Activated CD4-positive, alpha-beta memory T cell treated with anti-CD3 and anti-CD28 coated beads for 36 hours (primary cell): ENCODE measurements at regions of chr6 and their contacts with region 1.

Region 1: GRCh38 chr6:152338335-152339125 is 298.6 kb downstream of the SYNE1 start:
- DNase-seq: peak; percentile 72
- H3K4me3 Mint-ChIP-seq: no peak overlapping the region
- H3K27ac Mint-ChIP-seq: no peak overlapping the region
- H3K4me1 Mint-ChIP-seq: peaks cover 2% of the 10 kb centered on the region
- H3K27me3 Mint-ChIP-seq: peaks cover 2% of the 10 kb centered on the region

Region 2: DNA sequence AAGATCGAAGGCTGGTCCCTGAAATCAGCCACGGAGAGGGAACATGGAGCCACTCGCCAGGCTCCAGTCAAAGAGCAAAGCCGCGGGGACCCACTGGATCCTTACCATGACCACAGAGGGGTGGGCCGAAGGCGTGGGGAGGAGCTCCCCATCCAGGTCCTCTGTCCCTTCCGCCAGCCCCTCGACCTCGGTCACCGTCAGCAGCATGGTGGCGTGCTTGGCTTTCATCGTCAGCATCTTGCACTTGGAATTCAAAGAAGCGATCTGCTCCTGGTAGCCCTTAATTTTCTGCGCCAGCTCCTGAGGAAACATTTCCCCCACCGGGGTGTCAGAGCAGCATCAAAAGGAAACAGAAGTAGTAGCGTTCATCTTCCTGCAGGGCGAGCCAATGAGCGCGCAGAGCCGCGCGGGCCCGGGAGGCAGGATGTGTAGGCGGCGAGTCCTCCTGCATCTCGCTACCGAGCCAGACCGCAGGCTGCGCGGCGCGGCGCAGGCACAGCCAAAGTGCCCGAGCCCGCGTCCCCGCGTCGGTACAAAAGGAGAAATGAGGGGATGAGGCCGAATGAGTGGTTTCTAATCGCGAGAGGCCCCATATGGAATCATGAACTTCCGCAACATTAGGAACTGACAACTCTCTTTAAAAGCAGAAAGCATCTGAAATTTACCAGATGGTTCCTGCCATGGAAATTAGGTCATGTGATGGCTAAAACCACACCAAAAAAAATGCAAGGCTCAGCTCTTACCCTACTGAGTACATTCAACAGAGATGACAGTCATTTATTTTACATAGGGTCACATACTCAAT is 36.6 kb before region 1 on chr6:
- CTCF ChIA-PET with region 1: interaction called, 84 read pairs
- POLR2A ChIA-PET with region 1: interaction called, 5 read pairs
- intact Hi-C with region 1: loop called (anchors 1 kb)
- DNase-seq: peak; percentile 94
- H3K4me3 Mint-ChIP-seq: peak overlapping the region; percentile 99
- H3K27ac Mint-ChIP-seq: peak overlapping the region; percentile 95
- H3K4me1 Mint-ChIP-seq: peaks cover 31% of the 10 kb centered on the region
- H3K27me3 Mint-ChIP-seq: no peaks in the 10 kb centered on the region

Region 3: GRCh38 chr6:152309648-152310047 is 28.9 kb before region 1 on chr6:
- CTCF ChIA-PET with region 1: interaction called, 16 read pairs
- POLR2A ChIA-PET with region 1: no interaction called
- intact Hi-C with region 1: no loop called
- DNase-seq: peak; percentile 87
- H3K4me3 Mint-ChIP-seq: no peak overlapping the region
- H3K27ac Mint-ChIP-seq: peak overlapping the region; percentile 57
- H3K4me1 Mint-ChIP-seq: peaks cover 18% of the 10 kb centered on the region
- H3K27me3 Mint-ChIP-seq: no peaks in the 10 kb centered on the region

Region 4: GRCh38 chr6:152316024-152316423 is 22.5 kb before region 1 on chr6:
- CTCF ChIA-PET with region 1: interaction called, 19 read pairs
- POLR2A ChIA-PET with region 1: no interaction called
- intact Hi-C with region 1: no loop called
- DNase-seq: no peak
- H3K4me3 Mint-ChIP-seq: no peak overlapping the region
- H3K27ac Mint-ChIP-seq: no peak overlapping the region
- H3K4me1 Mint-ChIP-seq: no peaks in the 10 kb centered on the region
- H3K27me3 Mint-ChIP-seq: peaks cover 2% of the 10 kb centered on the region

Region 5: DNA sequence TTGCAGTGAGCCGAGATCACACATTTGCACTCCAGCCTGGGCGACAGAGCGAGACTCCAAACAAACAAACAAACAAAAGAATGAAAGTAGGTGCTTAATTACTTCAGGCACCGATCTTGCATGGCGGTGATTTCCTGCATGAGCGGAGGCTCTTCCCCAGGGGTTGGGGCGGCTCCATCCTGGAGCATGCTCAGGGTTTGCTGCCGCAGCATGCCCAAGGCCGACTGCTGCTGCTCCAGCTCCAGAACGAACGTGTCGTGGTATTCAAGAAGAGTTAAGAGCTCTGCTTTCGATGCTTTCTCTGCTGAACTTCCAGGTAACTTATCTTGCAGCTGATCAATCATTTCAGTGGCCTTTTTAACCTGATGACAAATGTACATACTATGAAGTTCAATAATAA is 15.2 kb before region 1 on chr6:
- CTCF ChIA-PET with region 1: interaction called, 24 read pairs
- POLR2A ChIA-PET with region 1: no interaction called
- intact Hi-C with region 1: no loop called
- DNase-seq: no peak
- H3K4me3 Mint-ChIP-seq: no peak overlapping the region
- H3K27ac Mint-ChIP-seq: no peak overlapping the region
- H3K4me1 Mint-ChIP-seq: no peaks in the 10 kb centered on the region
- H3K27me3 Mint-ChIP-seq: peaks cover 5% of the 10 kb centered on the region

Region 6: DNA sequence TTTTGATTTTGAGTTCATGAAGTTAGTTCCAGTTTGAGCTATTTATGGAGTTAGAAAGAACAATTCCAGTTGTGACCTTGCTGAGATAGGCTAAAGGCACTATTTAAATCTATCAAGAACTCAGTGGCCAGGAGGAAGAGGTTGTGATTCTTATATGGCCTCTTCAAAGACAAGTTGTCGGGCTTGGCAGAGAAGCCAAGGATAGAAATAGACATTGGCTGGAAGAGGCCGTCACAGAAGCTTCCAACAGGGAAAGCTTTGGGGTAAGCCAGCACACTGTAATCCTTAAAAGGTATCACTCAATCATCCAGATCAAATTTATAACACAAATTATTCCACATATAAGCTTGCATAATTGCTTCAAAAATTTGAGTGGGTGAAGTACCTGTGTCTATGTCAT is 12.6 kb after region 1 on chr6:
- CTCF ChIA-PET with region 1: interaction called, 25 read pairs
- POLR2A ChIA-PET with region 1: no interaction called
- intact Hi-C with region 1: no loop called
- DNase-seq: no peak
- H3K4me3 Mint-ChIP-seq: no peak overlapping the region
- H3K27ac Mint-ChIP-seq: no peak overlapping the region
- H3K4me1 Mint-ChIP-seq: no peaks in the 10 kb centered on the region
- H3K27me3 Mint-ChIP-seq: peaks cover 2% of the 10 kb centered on the region

Region 7: GRCh38 chr6:152432758-152433157 is 94.2 kb after region 1 on chr6:
- CTCF ChIA-PET with region 1: no interaction called
- POLR2A ChIA-PET with region 1: no interaction called
- intact Hi-C with region 1: no loop called
- DNase-seq: no peak
- H3K4me3 Mint-ChIP-seq: no peak overlapping the region
- H3K27ac Mint-ChIP-seq: no peak overlapping the region
- H3K4me1 Mint-ChIP-seq: no peaks in the 10 kb centered on the region
- H3K27me3 Mint-ChIP-seq: peaks cover 6% of the 10 kb centered on the region

Region 8: DNA sequence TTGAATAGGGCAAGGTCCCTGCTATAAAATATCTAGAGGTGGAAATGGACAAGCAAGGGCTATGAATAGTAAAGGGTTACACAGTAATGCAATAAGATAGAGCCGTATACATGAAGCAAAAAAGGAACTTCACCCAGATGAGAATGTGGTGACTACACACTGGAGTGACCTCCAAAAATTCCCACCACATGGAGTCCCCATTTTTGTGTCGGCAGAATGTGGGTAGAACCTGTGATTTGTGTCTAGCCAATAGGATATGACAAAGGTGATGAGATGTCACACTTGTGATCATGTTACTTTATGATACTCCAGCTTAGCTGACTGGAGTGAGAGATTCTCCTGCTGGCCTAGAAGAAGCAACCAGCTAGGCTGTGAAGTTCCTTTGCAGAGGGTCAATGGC is 201.9 kb after region 1 on chr6:
- CTCF ChIA-PET with region 1: no interaction called
- POLR2A ChIA-PET with region 1: no interaction called
- intact Hi-C with region 1: no loop called
- DNase-seq: no peak
- H3K4me3 Mint-ChIP-seq: no peak overlapping the region
- H3K27ac Mint-ChIP-seq: no peak overlapping the region
- H3K4me1 Mint-ChIP-seq: no peaks in the 10 kb centered on the region
- H3K27me3 Mint-ChIP-seq: peaks cover 5% of the 10 kb centered on the region